ENCODE measurements at regions of chr5 and their contacts with region 1.

Region 1: DNA sequence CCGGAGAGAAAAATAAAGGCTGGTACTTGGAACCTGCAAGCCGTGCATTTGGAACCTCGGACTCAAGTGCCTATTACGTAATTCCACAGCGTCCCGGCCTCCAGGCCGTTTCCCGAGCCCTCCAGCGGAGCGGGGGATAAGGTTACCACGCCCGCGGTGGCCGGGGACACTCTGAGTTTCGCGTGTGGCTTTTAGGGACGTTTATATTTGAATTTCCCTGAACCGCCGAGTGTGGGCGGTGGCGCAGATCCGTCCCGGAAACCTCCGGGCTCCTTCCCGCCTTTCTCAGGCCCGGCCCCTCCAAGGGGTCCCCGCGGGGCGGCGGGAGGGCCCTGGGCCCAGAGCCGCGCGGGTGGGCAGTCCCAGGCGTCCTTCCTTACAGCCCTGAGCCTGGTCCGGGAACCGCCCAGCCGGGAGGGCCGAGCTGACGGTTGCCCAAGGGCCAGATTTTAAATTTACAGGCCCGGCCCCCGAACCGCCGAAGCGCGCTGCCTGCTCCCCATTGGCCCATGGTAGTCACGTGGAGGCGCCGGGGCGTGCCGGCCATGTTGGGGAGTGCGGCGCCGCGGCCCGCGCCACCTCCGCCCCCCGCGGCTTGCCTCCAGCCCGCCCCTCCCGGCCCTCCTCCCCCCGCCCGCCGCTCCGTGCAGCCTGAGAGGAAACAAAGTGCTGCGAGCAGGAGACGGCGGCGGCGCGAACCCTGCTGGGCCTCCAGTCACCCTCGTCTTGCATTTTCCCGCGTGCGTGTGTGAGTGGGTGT is at the start of gene LMNB1:
- DNase-seq: peak; percentile 97
- ATAC-seq: peak; percentile 70
- H3K4me3 Mint-ChIP-seq: peak within 1 kb of the TSS; percentile 97
- H3K27ac Mint-ChIP-seq: peak within 1 kb of the TSS; percentile 99
- H3K4me1 Mint-ChIP-seq: peaks cover 32% of the 10 kb centered on the region
- H3K27me3 Mint-ChIP-seq: no peaks in the 10 kb centered on the region
- total RNA-seq, gene LMNB1: 209 to 240 TPM

Region 2: GRCh38 chr5:126422989-126423788 is 353.5 kb before region 1 on chr5 and contains the start of gene GRAMD2B:
- CTCF ChIA-PET with region 1: no interaction called
- POLR2A ChIA-PET with region 1: no interaction called
- intact Hi-C with region 1: loop called in 1 of 2 experiments (anchors 1 kb)
- DNase-seq: peak; percentile 82
- ATAC-seq: peak; percentile 86
- H3K4me3 Mint-ChIP-seq: peak within 1 kb of the TSS; percentile 87
- H3K27ac Mint-ChIP-seq: peak within 1 kb of the TSS; percentile 90
- H3K4me1 Mint-ChIP-seq: peaks cover 40% of the 10 kb centered on the region
- H3K27me3 Mint-ChIP-seq: no peaks in the 10 kb centered on the region
- total RNA-seq, gene GRAMD2B: 9.7 to 13.9 TPM

Region 3: GRCh38 chr5:126656396-126657007 is 120.2 kb before region 1 on chr5:
- CTCF ChIA-PET with region 1: interaction called, 6 read pairs
- POLR2A ChIA-PET with region 1: interaction called, 3 read pairs
- intact Hi-C with region 1: loop called in 1 of 2 experiments (anchors 1 kb)
- DNase-seq: peak; percentile 52
- ATAC-seq: no peak
- H3K4me3 Mint-ChIP-seq: no peak overlapping the region
- H3K27ac Mint-ChIP-seq: no peak overlapping the region
- H3K4me1 Mint-ChIP-seq: peaks cover 5% of the 10 kb centered on the region
- H3K27me3 Mint-ChIP-seq: peaks cover 2% of the 10 kb centered on the region

Region 4: DNA sequence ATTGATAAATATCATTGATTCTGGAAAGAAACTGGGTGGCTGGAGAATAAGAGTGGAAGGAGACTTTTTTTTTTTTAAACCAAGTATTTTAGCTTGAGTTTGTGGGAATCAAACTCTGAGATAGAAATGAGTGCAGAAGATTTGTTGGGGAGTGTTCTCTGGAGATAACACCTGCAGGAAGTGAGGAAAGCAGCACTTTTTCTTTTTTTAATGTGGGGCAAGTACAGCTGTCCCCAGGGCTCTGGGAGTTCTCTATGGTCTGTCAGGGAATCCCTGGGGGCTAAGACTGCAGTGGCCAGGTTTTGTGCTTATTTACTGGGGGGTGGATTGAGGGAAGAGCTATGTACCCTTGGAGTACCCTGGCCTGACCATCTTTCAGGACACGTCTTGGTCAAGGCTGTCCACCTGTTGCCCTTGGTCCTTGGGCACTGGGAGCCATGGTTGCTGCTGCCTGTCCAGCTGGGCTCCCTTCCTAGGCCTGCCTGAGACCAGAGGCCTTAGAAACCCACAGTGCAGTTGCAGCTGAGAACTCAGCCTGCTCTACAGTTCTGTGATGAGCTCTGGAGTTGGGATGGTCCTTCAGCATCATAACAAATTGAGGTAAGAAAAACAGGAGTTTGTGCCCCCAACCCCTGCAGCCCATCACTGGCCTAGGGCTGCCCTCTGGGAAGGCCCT is 90.1 kb before region 1 on chr5:
- CTCF ChIA-PET with region 1: interaction called, 13 read pairs
- POLR2A ChIA-PET with region 1: interaction called, 35 read pairs
- intact Hi-C with region 1: loop called (anchors 1 to 2 kb)
- DNase-seq: no peak
- ATAC-seq: no peak
- H3K4me3 Mint-ChIP-seq: no peak overlapping the region
- H3K27ac Mint-ChIP-seq: no peak overlapping the region
- H3K4me1 Mint-ChIP-seq: peaks cover 28% of the 10 kb centered on the region
- H3K27me3 Mint-ChIP-seq: no peaks in the 10 kb centered on the region

Region 5: DNA sequence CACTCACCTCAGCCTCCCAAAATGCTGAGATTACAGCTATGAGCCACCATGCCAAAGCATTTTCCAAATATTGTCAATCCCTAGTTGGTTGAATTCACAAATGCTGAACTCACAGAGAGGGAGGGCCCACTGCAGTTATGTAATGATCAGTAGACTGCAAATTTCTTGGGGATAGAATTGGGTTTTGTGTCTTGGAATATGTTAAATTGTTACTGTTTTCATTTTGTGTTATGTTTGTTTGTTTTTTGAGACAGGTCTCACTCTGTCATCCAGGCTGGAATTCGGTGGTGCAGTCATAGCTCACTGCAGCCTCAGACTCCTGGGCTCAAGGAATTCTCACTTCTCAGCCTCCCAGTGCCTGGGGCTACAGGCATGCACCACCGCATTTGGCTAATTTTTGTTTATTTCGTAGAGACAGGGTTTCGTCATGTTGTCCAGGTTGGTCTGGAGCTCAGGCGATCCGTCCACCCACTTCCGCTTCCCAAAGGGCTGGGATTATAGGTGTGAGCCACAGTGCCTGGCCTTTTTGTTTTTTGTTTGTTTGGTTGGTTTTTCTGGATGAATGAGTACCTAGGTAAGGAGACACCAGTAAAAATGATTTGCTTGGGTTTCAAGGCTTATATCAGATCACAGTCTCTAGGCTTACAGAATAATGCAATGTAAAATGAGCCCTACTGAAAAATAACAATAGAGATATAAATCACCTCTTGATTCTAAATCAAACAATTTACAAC is 31.3 kb before region 1 on chr5:
- CTCF ChIA-PET with region 1: interaction called, 7 read pairs
- POLR2A ChIA-PET with region 1: interaction called, 19 read pairs
- intact Hi-C with region 1: loop called (anchors 1 kb)
- DNase-seq: no peak
- ATAC-seq: no peak
- H3K4me3 Mint-ChIP-seq: no peak overlapping the region
- H3K27ac Mint-ChIP-seq: no peak overlapping the region
- H3K4me1 Mint-ChIP-seq: peaks cover 34% of the 10 kb centered on the region
- H3K27me3 Mint-ChIP-seq: peaks cover 3% of the 10 kb centered on the region

Region 6: GRCh38 chr5:126808521-126808988 is 31.9 kb after region 1 on chr5:
- CTCF ChIA-PET with region 1: interaction called, 14 read pairs
- POLR2A ChIA-PET with region 1: interaction called, 57 read pairs
- intact Hi-C with region 1: loop called (anchors 1 to 2 kb)
- DNase-seq: no peak
- ATAC-seq: no peak
- H3K4me3 Mint-ChIP-seq: no peak overlapping the region
- H3K27ac Mint-ChIP-seq: no peak overlapping the region
- H3K4me1 Mint-ChIP-seq: peaks cover 51% of the 10 kb centered on the region
- H3K27me3 Mint-ChIP-seq: no peaks in the 10 kb centered on the region

Region 7: GRCh38 chr5:127011961-127012644 is 235.4 kb after region 1 on chr5:
- CTCF ChIA-PET with region 1: no interaction called
- POLR2A ChIA-PET with region 1: no interaction called
- intact Hi-C with region 1: no loop called
- DNase-seq: no peak
- ATAC-seq: peak; percentile 88
- H3K4me3 Mint-ChIP-seq: no peak overlapping the region
- H3K27ac Mint-ChIP-seq: no peak overlapping the region
- H3K4me1 Mint-ChIP-seq: peaks cover 44% of the 10 kb centered on the region
- H3K27me3 Mint-ChIP-seq: no peaks in the 10 kb centered on the region

Region 8: GRCh38 chr5:127517480-127518318 is 741.0 kb after region 1 on chr5 and contains the start of gene PRRC1:
- CTCF ChIA-PET with region 1: no interaction called
- POLR2A ChIA-PET with region 1: no interaction called
- intact Hi-C with region 1: loop called in 1 of 2 experiments (anchors 1 kb)
- DNase-seq: peak; percentile 90
- ATAC-seq: peak; percentile 95
- H3K4me3 Mint-ChIP-seq: peak within 1 kb of the TSS; percentile 80
- H3K27ac Mint-ChIP-seq: peak within 1 kb of the TSS; percentile 77
- H3K4me1 Mint-ChIP-seq: peaks cover 28% of the 10 kb centered on the region
- H3K27me3 Mint-ChIP-seq: no peaks in the 10 kb centered on the region
- total RNA-seq, gene PRRC1: 35.8 to 47.1 TPM

Region 9: GRCh38 chr5:128546664-128547135 is 1770.0 kb after region 1 on chr5:
- CTCF ChIA-PET with region 1: no interaction called
- POLR2A ChIA-PET with region 1: no interaction called
- intact Hi-C with region 1: no loop called
- DNase-seq: no peak
- ATAC-seq: no peak
- H3K4me3 Mint-ChIP-seq: no peak overlapping the region
- H3K27ac Mint-ChIP-seq: no peak overlapping the region
- H3K4me1 Mint-ChIP-seq: no peaks in the 10 kb centered on the region
- H3K27me3 Mint-ChIP-seq: no peaks in the 10 kb centered on the region

Measured in activated CD4-positive, alpha-beta T cell treated with anti-CD3 and anti-CD28 coated beads for 36 hours (primary cell).